ENCODE measurements at regions of chr9 and their contacts with region 1.

Region 1: GRCh38 chr9:115333277-115334070 is 215.5 kb upstream of the TNC start:
- DNase-seq: no peak
- H3K4me3 ChIP-seq: no peak overlapping the region
- CTCF ChIP-seq: no peak

Region 2: DNA sequence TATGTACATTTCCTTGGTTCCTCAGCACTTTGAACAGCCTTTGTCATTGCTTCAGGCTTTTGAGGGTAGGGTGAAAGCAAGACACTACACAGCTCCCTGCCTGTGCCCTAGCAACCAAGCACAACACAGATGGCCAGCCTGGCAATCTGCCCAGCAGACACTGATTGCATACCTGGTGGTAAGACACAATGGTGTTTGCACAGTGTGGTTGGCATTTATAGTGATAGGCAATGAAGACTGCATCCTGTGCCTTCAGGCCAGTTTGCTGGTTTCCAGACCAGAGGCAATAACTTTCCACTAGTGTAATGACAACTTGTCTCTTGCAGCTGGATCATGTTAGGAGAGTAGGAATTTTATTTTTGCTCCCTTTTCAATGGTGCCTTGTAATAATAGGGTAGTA is 71.0 kb before region 1 on chr9:
- in situ Hi-C with region 1: loop called (anchors 5 kb)
- DNase-seq: peak; percentile 53
- H3K4me3 ChIP-seq: no peak overlapping the region
- CTCF ChIP-seq: no peak